ENCODE measurements at regions of chr7 and their contacts with region 1.

Region 1: GRCh38 chr7:151028131-151028947 is at the start of gene ABCB8:
- DNase-seq: peak; percentile 99 to 100 (median 99)
- H3K4me3 ChIP-seq: peak within 1 kb of the TSS; percentile 84 to 88
- H3K4me3 Mint-ChIP-seq: peak within 1 kb of the TSS; percentile 92 to 97 (median 95)
- H3K27ac ChIP-seq: peak within 1 kb of the TSS; percentile 88
- H3K27ac Mint-ChIP-seq: peak within 1 kb of the TSS; percentile 99 to 100 (median 99)
- H3K4me1 ChIP-seq: peaks cover 21% of the 10 kb centered on the region
- H3K4me1 Mint-ChIP-seq: peaks cover 13 to 28% (median 21%) of the 10 kb centered on the region in 4 donors
- H3K27me3 ChIP-seq: no peaks in the 10 kb centered on the region
- H3K27me3 Mint-ChIP-seq: no peaks in the 10 kb centered on the region
- total RNA-seq, gene ABCB8: 71.2 to 75.8 TPM

Region 2: GRCh38 chr7:150404805-150405583 is 623.3 kb before region 1 on chr7:
- CTCF ChIA-PET with region 1: no interaction called
- POLR2A ChIA-PET with region 1: no interaction called
- intact Hi-C with region 1: loop called (anchors 1 kb)
- DNase-seq: peak; percentile 75 to 80 (median 77)
- H3K4me3 ChIP-seq: peak overlapping the region; percentile 62 to 92
- H3K4me3 Mint-ChIP-seq: peak overlapping the region; percentile 93 to 99 (median 98)
- H3K27ac ChIP-seq: peak overlapping the region; percentile 85
- H3K27ac Mint-ChIP-seq: peak overlapping the region; percentile 80 to 99 (median 98)
- H3K4me1 ChIP-seq: peaks cover 30% of the 10 kb centered on the region
- H3K4me1 Mint-ChIP-seq: peaks cover 21 to 53% (median 39%) of the 10 kb centered on the region in 4 donors
- H3K27me3 ChIP-seq: no peaks in the 10 kb centered on the region
- H3K27me3 Mint-ChIP-seq: no peaks in the 10 kb centered on the region

Region 3: DNA sequence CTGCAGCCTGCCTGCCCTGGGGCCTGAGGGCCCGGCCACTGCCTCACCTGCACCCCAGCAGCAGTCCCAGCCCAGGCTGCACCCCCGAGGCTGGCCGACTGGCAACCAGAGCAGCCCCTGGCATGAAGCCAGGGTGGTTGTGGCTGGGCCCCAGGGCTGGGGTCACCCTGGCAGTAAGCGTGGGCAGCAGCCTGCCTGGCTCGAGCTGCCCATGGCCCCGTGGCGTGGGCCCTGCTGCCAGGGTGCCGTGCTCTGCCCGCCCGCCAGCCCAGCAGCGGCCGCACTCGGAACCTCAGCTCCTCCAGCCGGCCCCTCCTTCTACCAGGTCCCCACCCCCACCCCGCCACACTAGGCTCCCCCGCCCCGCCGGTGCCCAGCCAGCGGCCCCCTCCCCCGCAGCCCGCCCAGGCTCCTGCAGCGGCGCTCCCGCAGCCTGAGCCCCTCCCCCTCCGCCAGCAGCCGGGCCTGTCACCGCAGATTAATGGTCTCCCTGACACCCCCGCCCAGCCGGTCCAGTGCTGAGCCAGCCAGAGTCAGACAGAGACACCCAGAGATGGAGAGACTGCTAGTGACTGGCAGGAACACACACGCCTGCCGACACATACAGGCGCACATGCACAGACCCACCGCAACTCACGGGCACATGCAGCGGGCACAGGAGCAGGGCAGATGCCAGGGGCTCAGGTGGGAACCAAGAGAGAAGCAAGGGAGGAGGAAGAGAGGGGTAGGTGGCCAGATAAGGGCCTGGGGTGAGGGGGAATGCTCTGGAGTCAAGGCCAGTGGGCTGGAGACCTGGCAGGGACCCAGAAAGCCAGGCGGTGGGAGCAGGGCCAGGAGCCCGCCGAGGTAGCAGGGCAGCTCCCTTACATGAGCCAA is 72.6 kb before region 1 on chr7:
- CTCF ChIA-PET with region 1: no interaction called
- POLR2A ChIA-PET with region 1: no interaction called
- intact Hi-C with region 1: no loop called
- DNase-seq: peak in 1 of 5 donors; percentile 36
- H3K4me3 ChIP-seq: no peak overlapping the region
- H3K4me3 Mint-ChIP-seq: no peak overlapping the region
- H3K27ac ChIP-seq: no peak overlapping the region
- H3K27ac Mint-ChIP-seq: no peak overlapping the region
- H3K4me1 ChIP-seq: peaks cover 9% of the 10 kb centered on the region
- H3K4me1 Mint-ChIP-seq: peaks cover 5 to 25% (median 12%) of the 10 kb centered on the region in 4 donors
- H3K27me3 ChIP-seq: peaks cover 7% of the 10 kb centered on the region
- H3K27me3 Mint-ChIP-seq: peaks cover 22 to 29% of the 10 kb centered on the region in 2 donors

Region 4: DNA sequence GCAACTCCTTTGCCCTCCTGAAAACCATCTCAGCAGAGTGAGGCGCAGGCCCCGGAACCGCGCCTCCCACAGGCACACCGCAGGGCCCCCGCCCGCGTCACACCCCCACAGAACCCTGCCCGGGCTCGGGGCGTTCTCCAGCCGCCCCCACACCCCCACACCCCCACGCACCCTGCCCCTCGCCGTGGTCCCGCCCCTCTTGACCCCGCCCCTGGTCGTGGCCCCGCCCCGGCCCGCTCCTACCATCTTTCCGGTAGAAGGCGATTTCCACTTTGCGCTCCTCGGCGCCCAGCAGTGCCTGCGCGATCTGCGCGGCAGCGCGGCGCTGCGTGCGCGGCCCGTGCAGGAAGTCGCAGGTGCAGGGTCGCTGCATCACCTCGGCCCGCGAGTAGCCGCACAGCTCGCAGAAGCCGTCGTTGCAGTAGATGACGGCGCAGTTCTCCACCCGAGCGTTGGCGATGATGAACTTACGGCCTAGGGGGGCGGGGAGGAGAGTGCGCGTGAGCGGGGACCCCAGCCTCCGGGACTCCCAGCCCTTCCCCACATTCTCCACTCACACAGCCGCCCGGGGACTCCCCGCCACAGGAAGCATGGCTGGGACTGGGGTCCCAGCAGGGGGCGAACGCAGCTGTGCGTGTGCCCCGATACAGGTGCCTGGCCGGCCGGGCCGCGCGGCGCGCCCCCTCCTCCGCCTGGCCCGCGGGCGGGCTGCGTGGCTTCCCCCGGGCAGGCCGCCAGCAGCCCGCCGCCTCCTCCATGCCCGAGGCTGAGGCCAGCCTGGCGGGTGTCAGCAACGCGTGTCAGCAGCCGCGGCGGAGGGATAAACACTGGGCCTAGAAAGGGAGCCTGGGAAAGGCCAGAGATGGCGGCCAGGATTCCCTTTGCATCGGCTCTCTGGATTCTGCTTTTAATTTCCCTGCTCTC is 53.6 kb before region 1 on chr7:
- CTCF ChIA-PET with region 1: interaction called, 3 read pairs
- POLR2A ChIA-PET with region 1: interaction called, 11 read pairs
- intact Hi-C with region 1: no loop called
- DNase-seq: peak; percentile 79 to 87 (median 83)
- H3K4me3 ChIP-seq: peak overlapping the region; percentile 36 to 51
- H3K4me3 Mint-ChIP-seq: peak overlapping the region; percentile 83 to 94 (median 88)
- H3K27ac ChIP-seq: peak overlapping the region; percentile 63
- H3K27ac Mint-ChIP-seq: peak overlapping the region; percentile 87 to 97 (median 95)
- H3K4me1 ChIP-seq: peaks cover 46% of the 10 kb centered on the region
- H3K4me1 Mint-ChIP-seq: peaks cover 18 to 54% (median 44%) of the 10 kb centered on the region in 4 donors
- H3K27me3 ChIP-seq: peaks cover 15% of the 10 kb centered on the region
- H3K27me3 Mint-ChIP-seq: peaks cover 6 to 17% of the 10 kb centered on the region in 2 donors

Region 5: GRCh38 chr7:151057989-151058780 is 29.8 kb after region 1 on chr7:
- CTCF ChIA-PET with region 1: interaction called, 4 read pairs
- POLR2A ChIA-PET with region 1: interaction called, 35 read pairs
- intact Hi-C with region 1: loop called (anchors 1 kb)
- DNase-seq: peak; percentile 95 to 99 (median 98)
- H3K4me3 ChIP-seq: peak overlapping the region; percentile 45 to 70
- H3K4me3 Mint-ChIP-seq: peak overlapping the region; percentile 86 to 97 (median 94)
- H3K27ac ChIP-seq: peak overlapping the region; percentile 85
- H3K27ac Mint-ChIP-seq: peak overlapping the region; percentile 85 to 99 (median 96)
- H3K4me1 ChIP-seq: peaks cover 45% of the 10 kb centered on the region
- H3K4me1 Mint-ChIP-seq: peaks cover 18 to 54% (median 37%) of the 10 kb centered on the region in 4 donors
- H3K27me3 ChIP-seq: no peaks in the 10 kb centered on the region
- H3K27me3 Mint-ChIP-seq: peaks cover 0 to 2% of the 10 kb centered on the region in 2 donors

Region 6: GRCh38 chr7:151085691-151086620 is 57.6 kb after region 1 on chr7 and contains the start of gene AGAP3:
- CTCF ChIA-PET with region 1: interaction called, 11 read pairs
- POLR2A ChIA-PET with region 1: interaction called, 22 read pairs
- intact Hi-C with region 1: loop called (anchors 1 kb)
- DNase-seq: peak; percentile 53 to 68 (median 57)
- H3K4me3 ChIP-seq: peak within 1 kb of the TSS; percentile 69 to 88
- H3K4me3 Mint-ChIP-seq: peak within 1 kb of the TSS; percentile 90 to 94 (median 91)
- H3K27ac ChIP-seq: peak within 1 kb of the TSS; percentile 62
- H3K27ac Mint-ChIP-seq: peak within 1 kb of the TSS; percentile 90 to 98 (median 93)
- H3K4me1 ChIP-seq: peaks cover 54% of the 10 kb centered on the region
- H3K4me1 Mint-ChIP-seq: peaks cover 22 to 57% (median 34%) of the 10 kb centered on the region in 4 donors
- H3K27me3 ChIP-seq: no peaks in the 10 kb centered on the region
- H3K27me3 Mint-ChIP-seq: no peaks in the 10 kb centered on the region
- total RNA-seq, gene AGAP3: 52.9 to 65.8 TPM